ENCODE measurements at regions of chr6 and their contacts with region 1.

Region 1: GRCh38 chr6:71139249-71139648 is 149.4 kb upstream of the OGFRL1 start:
- DNase-seq: no peak
- H3K4me3 ChIP-seq: no peak overlapping the region
- H3K27ac ChIP-seq: no peak overlapping the region
- H3K4me1 ChIP-seq: no peaks in the 10 kb centered on the region
- H3K27me3 ChIP-seq: no peaks in the 10 kb centered on the region
- CTCF ChIP-seq: no peak
- POLR2A ChIP-seq: no peak

Region 2: DNA sequence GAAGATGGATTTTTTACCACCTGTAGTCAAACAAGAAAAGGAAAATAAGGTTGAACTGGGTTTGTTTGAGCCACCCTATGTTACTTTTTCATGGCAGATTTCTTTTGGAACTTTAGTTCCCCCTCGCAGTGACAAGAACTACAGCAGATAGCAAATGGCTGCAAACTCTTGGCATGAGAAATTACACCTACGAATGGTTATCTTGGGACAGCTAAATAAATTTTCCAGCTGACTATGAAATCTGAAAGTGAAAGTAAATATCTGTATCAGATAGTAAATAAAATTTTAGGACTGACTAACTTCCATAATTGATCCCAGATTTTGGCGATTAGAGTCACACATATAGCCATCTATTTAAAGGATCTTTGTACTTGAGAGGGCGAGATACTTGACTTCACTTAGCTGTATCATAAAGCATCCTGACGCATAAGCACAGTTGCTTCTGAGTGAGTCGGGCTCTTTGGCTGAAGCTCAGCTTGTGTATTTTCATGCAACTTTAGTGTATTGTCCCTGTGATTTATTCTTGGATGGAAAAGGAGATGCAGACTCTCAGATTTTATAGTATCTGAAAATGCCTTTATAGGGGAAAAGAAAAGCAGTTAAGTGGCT is 57.1 kb before region 1 on chr6:
- intact Hi-C with region 1: no loop called
- DNase-seq: no peak
- H3K4me3 ChIP-seq: peak overlapping the region; percentile 15 to 38 (median 19)
- H3K27ac ChIP-seq: no peak overlapping the region
- H3K4me1 ChIP-seq: no peaks in the 10 kb centered on the region
- H3K27me3 ChIP-seq: no peaks in the 10 kb centered on the region
- CTCF ChIP-seq: no peak
- POLR2A ChIP-seq: no peak

Region 3: GRCh38 chr6:71239694-71240093 is 100.4 kb after region 1 on chr6:
- intact Hi-C with region 1: loop called (anchors 5 kb)
- DNase-seq: no peak
- H3K4me3 ChIP-seq: no peak overlapping the region
- H3K27ac ChIP-seq: no peak overlapping the region
- H3K4me1 ChIP-seq: no peaks in the 10 kb centered on the region
- H3K27me3 ChIP-seq: no peaks in the 10 kb centered on the region
- CTCF ChIP-seq: no peak
- POLR2A ChIP-seq: no peak